ENCODE measurements at regions of chr21 and their contacts with region 1.

Region 1: GRCh38 chr21:45643021-45643980 is at the start of gene PCBP3:
- DNase-seq: peak; percentile 99
- ATAC-seq: peak; percentile 84
- H3K4me3 Mint-ChIP-seq: peak within 1 kb of the TSS; percentile 78
- H3K27ac Mint-ChIP-seq: peak within 1 kb of the TSS; percentile 70
- H3K4me1 Mint-ChIP-seq: peaks cover 47% of the 10 kb centered on the region
- H3K27me3 Mint-ChIP-seq: peaks cover 4% of the 10 kb centered on the region
- total RNA-seq, gene PCBP3: 12.2 to 13.2 TPM

Region 2: GRCh38 chr21:45404730-45405270 is 238.5 kb before region 1 on chr21 and contains the start of gene COL18A1:
- CTCF ChIA-PET with region 1: no interaction called
- POLR2A ChIA-PET with region 1: no interaction called
- intact Hi-C with region 1: loop called in 1 of 2 experiments (anchors 1 kb)
- DNase-seq: peak; percentile 70
- ATAC-seq: peak; percentile 55
- H3K4me3 Mint-ChIP-seq: peak within 1 kb of the TSS; percentile 69
- H3K27ac Mint-ChIP-seq: no peak within 1 kb of the TSS
- H3K4me1 Mint-ChIP-seq: peaks cover 13% of the 10 kb centered on the region
- H3K27me3 Mint-ChIP-seq: peaks cover 43% of the 10 kb centered on the region
- total RNA-seq, gene COL18A1: 8.0 to 8.8 TPM

Region 3: GRCh38 chr21:45590246-45590725 is 53.0 kb before region 1 on chr21:
- CTCF ChIA-PET with region 1: interaction called, 3 read pairs
- POLR2A ChIA-PET with region 1: no interaction called
- intact Hi-C with region 1: loop called (anchors 1 to 5 kb)
- DNase-seq: peak; percentile 92
- ATAC-seq: peak; percentile 60
- H3K4me3 Mint-ChIP-seq: peak overlapping the region; percentile 36
- H3K27ac Mint-ChIP-seq: no peak overlapping the region
- H3K4me1 Mint-ChIP-seq: peaks cover 16% of the 10 kb centered on the region
- H3K27me3 Mint-ChIP-seq: peaks cover 16% of the 10 kb centered on the region

Region 4: DNA sequence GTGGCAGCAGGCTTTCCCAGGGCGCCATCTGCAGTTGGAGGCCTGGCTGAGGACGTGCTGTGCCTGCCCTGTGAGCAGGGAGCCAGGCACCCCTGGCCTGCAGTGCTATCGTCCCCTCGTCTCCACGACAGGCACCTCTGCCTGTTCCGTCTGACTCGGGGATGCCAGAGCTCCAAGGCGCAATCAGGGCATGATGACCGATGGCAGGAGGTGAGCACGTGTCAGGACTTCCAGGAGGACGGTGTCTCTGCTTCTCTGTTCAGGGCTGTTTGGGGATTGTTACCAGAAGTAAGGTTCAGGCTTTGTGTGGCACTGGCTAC is 125.4 kb after region 1 on chr21:
- CTCF ChIA-PET with region 1: interaction called, 4 read pairs
- POLR2A ChIA-PET with region 1: interaction called, 3 read pairs
- intact Hi-C with region 1: loop called (anchors 1 to 10 kb)
- DNase-seq: peak; percentile 64
- ATAC-seq: peak; percentile 3
- H3K4me3 Mint-ChIP-seq: peak overlapping the region; percentile 62
- H3K27ac Mint-ChIP-seq: peak overlapping the region; percentile 98
- H3K4me1 Mint-ChIP-seq: peaks cover 57% of the 10 kb centered on the region
- H3K27me3 Mint-ChIP-seq: no peaks in the 10 kb centered on the region

Region 5: GRCh38 chr21:46285761-46286496 is 642.6 kb after region 1 on chr21 and contains the start of gene YBEY:
- CTCF ChIA-PET with region 1: no interaction called
- POLR2A ChIA-PET with region 1: no interaction called
- intact Hi-C with region 1: loop called in 1 of 2 experiments (anchors 1 kb)
- DNase-seq: peak; percentile 94
- ATAC-seq: peak; percentile 94
- H3K4me3 Mint-ChIP-seq: peak within 1 kb of the TSS; percentile 88
- H3K27ac Mint-ChIP-seq: peak within 1 kb of the TSS; percentile 98
- H3K4me1 Mint-ChIP-seq: peaks cover 52% of the 10 kb centered on the region
- H3K27me3 Mint-ChIP-seq: no peaks in the 10 kb centered on the region
- total RNA-seq, gene YBEY: 16.9 to 20.6 TPM

Measured in activated CD4-positive, alpha-beta T cell treated with anti-CD3 and anti-CD28 coated beads for 36 hours (primary cell).